ENCODE measurements at regions of chr18 and their contacts with region 1.

Region 1: GRCh38 chr18:21914739-21915319 is 174.2 kb downstream of the MIB1 start:
- DNase-seq: peak; percentile 62
- ATAC-seq: peak; percentile 92
- H3K4me3 ChIP-seq: no peak overlapping the region
- H3K27ac ChIP-seq: no peak overlapping the region
- H3K4me1 ChIP-seq: no peaks in the 10 kb centered on the region
- H3K27me3 ChIP-seq: peaks cover 16% of the 10 kb centered on the region
- CTCF ChIP-seq: peak; percentile 86
- POLR2A ChIP-seq: no peak
- RAD21 ChIP-seq: peak; percentile 85

Region 2: GRCh38 chr18:21833604-21834298 is 81.1 kb before region 1 on chr18:
- CTCF ChIA-PET with region 1: no interaction called
- POLR2A ChIA-PET with region 1: no interaction called
- dilution Hi-C with region 1: no loop called
- in situ Hi-C with region 1: no loop called
- intact Hi-C with region 1: no loop called
- DNase-seq: no peak
- ATAC-seq: no peak
- H3K4me3 ChIP-seq: no peak overlapping the region
- H3K27ac ChIP-seq: no peak overlapping the region
- H3K4me1 ChIP-seq: peaks cover 2% of the 10 kb centered on the region; the same call in 1 of the 2 replicates
- H3K27me3 ChIP-seq: no peaks in the 10 kb centered on the region
- CTCF ChIP-seq: no peak
- POLR2A ChIP-seq: no peak
- RAD21 ChIP-seq: no peak

Region 3: GRCh38 chr18:22765896-22766295 is 851.1 kb after region 1 on chr18:
- CTCF ChIA-PET with region 1: no interaction called
- POLR2A ChIA-PET with region 1: no interaction called
- dilution Hi-C with region 1: no loop called
- in situ Hi-C with region 1: loop called (anchors 25 kb)
- intact Hi-C with region 1: no loop called
- DNase-seq: no peak
- ATAC-seq: no peak
- H3K4me3 ChIP-seq: no peak overlapping the region
- H3K27ac ChIP-seq: no peak overlapping the region
- H3K4me1 ChIP-seq: no peaks in the 10 kb centered on the region
- H3K27me3 ChIP-seq: peaks cover 3% of the 10 kb centered on the region; the same call in 1 of the 2 replicates
- CTCF ChIP-seq: no peak
- POLR2A ChIP-seq: no peak
- RAD21 ChIP-seq: no peak

Measured in IMR-90 (cell line).